ENCODE measurements at regions of chr15 and their contacts with region 1.

Region 1: DNA sequence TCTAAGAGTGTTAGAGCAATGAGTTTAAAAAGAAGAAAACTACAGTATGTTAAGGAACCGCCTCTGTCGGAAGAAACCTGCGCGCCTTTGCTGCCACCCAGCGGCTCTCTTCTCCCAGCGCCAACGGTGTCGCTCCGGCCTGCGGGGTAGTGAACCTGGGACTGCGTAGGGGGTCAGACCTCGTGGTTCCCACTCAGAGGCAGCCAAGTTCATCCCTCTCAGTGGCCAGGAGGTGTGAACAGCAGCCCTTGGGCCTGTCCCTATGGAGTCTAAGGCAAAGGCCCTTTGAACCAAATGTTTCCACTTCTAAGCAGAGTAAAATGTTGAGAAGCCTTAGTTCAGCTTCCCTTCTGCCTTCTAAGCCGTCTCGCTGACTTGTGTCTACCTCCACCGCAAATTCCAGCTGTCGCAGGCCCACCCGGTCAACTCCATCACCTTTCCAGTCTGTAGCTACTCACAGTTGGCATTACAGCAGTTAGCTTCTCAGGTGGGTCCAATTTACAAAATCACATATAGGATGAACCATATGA is 980 bp upstream of the RAB27A start:
- DNase-seq: peak; percentile 93
- ATAC-seq: peak; percentile 76
- H3K4me3 Mint-ChIP-seq: peak overlapping the region; percentile 90
- H3K27ac Mint-ChIP-seq: peak overlapping the region; percentile 92
- H3K4me1 Mint-ChIP-seq: peaks cover 20% of the 10 kb centered on the region
- H3K27me3 Mint-ChIP-seq: no peaks in the 10 kb centered on the region
- CTCF ChIP-seq: peak; percentile 90

Region 2: GRCh38 chr15:55196458-55197361 is 93.9 kb before region 1 on chr15 and contains the start of gene RSL24D1:
- CTCF ChIA-PET with region 1: interaction called, 7 read pairs
- POLR2A ChIA-PET with region 1: interaction called, 4 read pairs
- intact Hi-C with region 1: loop called (anchors 1 kb)
- DNase-seq: peak; percentile 98
- ATAC-seq: peak; percentile 99
- H3K4me3 Mint-ChIP-seq: no peak within 1 kb of the TSS
- H3K27ac Mint-ChIP-seq: no peak within 1 kb of the TSS
- H3K4me1 Mint-ChIP-seq: peaks cover 21% of the 10 kb centered on the region
- H3K27me3 Mint-ChIP-seq: no peaks in the 10 kb centered on the region
- CTCF ChIP-seq: peak; percentile 38
- total RNA-seq, gene RSL24D1: 183 to 194 TPM

Region 3: GRCh38 chr15:55221090-55222011 is 69.2 kb before region 1 on chr15:
- CTCF ChIA-PET with region 1: interaction called, 59 read pairs
- POLR2A ChIA-PET with region 1: interaction called, 11 read pairs
- intact Hi-C with region 1: loop called (anchors 1 kb)
- DNase-seq: peak; percentile 78
- ATAC-seq: peak; percentile 74
- H3K4me3 Mint-ChIP-seq: peak overlapping the region; percentile 47
- H3K27ac Mint-ChIP-seq: peak overlapping the region; percentile 95
- H3K4me1 Mint-ChIP-seq: peaks cover 77% of the 10 kb centered on the region
- H3K27me3 Mint-ChIP-seq: no peaks in the 10 kb centered on the region
- CTCF ChIP-seq: no peak